ENCODE measurements at regions of chr11 and their contacts with region 1.

Region 1: GRCh38 chr11:45964911-45965389 is 42.5 kb downstream of the LARGE2 start:
- DNase-seq: peak; percentile 66
- ATAC-seq: peak; percentile 95
- H3K4me3 Mint-ChIP-seq: no peak overlapping the region
- H3K27ac Mint-ChIP-seq: no peak overlapping the region
- H3K4me1 Mint-ChIP-seq: no peaks in the 10 kb centered on the region
- H3K27me3 Mint-ChIP-seq: no peaks in the 10 kb centered on the region
- CTCF ChIP-seq: peak; percentile 97

Region 2: GRCh38 chr11:45935349-45936064 is 29.4 kb before region 1 on chr11:
- CTCF ChIA-PET with region 1: interaction called, 14 read pairs
- POLR2A ChIA-PET with region 1: no interaction called
- intact Hi-C with region 1: no loop called
- DNase-seq: no peak
- ATAC-seq: no peak
- H3K4me3 Mint-ChIP-seq: no peak overlapping the region
- H3K27ac Mint-ChIP-seq: no peak overlapping the region
- H3K4me1 Mint-ChIP-seq: peaks cover 7% of the 10 kb centered on the region
- H3K27me3 Mint-ChIP-seq: no peaks in the 10 kb centered on the region
- CTCF ChIP-seq: no peak

Region 3: DNA sequence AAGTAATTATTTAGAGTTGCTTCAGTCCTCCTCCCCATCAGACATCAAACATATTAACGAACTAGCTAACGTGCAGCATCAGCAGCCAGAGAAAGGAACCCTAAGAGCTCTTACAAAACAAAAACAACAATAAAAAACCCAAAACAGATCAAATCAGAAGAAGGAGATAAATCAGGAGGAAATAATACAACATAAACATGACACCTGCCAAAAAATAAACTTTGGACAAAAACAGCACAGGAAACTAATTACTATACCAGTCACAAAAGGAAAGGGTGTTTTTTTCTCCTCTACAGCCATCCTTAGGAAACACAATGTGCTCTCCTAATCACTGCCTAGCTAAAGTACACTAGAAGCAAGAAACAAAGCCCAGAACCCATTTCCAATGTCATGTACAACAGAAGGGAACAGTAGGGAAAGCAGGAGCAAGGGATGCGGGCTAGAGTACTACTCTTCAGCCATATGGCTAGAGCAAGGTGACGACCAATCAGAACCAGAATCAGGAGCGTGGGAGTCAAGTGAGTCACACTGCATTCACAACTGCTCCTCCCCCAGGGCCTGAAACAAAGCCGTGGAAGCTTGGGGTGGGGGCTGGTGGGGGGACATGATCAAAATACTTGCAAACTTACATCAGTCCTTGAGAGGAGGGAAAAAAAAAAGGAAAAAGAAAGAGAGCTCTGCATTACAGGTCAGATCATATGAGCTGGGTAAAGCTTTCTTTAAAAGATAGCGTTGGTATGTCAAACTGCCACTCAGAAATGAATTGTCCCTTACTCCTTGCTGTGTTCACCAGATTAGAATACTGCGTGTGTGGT is 17.9 kb after region 1 on chr11:
- CTCF ChIA-PET with region 1: interaction called, 61 read pairs
- POLR2A ChIA-PET with region 1: interaction called, 4 read pairs
- intact Hi-C with region 1: no loop called
- DNase-seq: peak; percentile 66
- ATAC-seq: peak; percentile 89
- H3K4me3 Mint-ChIP-seq: peak overlapping the region; percentile 20
- H3K27ac Mint-ChIP-seq: peak overlapping the region; percentile 40
- H3K4me1 Mint-ChIP-seq: peaks cover 27% of the 10 kb centered on the region
- H3K27me3 Mint-ChIP-seq: no peaks in the 10 kb centered on the region
- CTCF ChIP-seq: no peak

Region 4: DNA sequence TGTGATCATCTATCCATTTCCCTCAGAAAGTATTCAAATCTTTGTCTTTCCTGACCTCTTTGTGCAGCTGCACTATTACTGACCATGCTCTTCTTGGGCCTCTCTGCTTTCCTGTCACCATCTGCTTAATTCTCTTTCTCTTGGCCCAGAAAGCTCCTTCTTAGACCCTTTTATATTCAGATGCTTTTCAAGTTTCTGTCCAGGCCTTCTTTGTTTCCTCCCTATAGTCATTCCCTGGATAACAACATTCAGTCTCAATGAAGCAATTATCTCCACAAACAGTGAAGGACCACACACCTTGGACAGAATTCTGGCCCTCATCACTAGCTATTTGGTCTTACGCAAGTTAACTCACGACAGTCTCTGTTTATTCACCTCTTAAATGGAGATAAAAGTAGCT is 47.2 kb after region 1 on chr11:
- CTCF ChIA-PET with region 1: interaction called, 89 read pairs
- POLR2A ChIA-PET with region 1: no interaction called
- intact Hi-C with region 1: no loop called
- DNase-seq: no peak
- ATAC-seq: no peak
- H3K4me3 Mint-ChIP-seq: no peak overlapping the region
- H3K27ac Mint-ChIP-seq: no peak overlapping the region
- H3K4me1 Mint-ChIP-seq: peaks cover 4% of the 10 kb centered on the region
- H3K27me3 Mint-ChIP-seq: no peaks in the 10 kb centered on the region
- CTCF ChIP-seq: no peak

Region 5: DNA sequence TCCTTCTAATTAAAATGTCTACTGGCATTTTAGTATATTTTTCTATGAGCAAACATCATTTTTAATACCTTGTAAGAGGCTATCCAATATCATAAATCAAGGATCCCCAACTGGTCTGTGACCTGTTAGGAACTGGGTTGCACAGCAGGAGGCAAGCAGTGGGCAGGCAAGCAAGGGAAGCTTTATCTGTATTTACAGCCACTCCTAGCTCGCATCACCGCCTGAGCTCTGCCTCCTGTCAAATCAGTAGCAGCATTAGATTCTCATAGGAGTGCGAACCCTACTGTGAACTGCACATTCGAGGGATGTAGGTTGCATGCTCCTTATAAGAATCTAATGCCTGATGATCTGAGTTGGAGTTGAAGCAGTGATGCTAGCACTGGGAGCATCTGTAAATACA is 242.3 kb after region 1 on chr11:
- CTCF ChIA-PET with region 1: interaction called, 10 read pairs
- POLR2A ChIA-PET with region 1: no interaction called
- intact Hi-C with region 1: no loop called
- DNase-seq: no peak
- ATAC-seq: no peak
- H3K4me3 Mint-ChIP-seq: no peak overlapping the region
- H3K27ac Mint-ChIP-seq: no peak overlapping the region
- H3K4me1 Mint-ChIP-seq: peaks cover 11% of the 10 kb centered on the region
- H3K27me3 Mint-ChIP-seq: peaks cover 15% of the 10 kb centered on the region
- CTCF ChIP-seq: no peak

Region 6: DNA sequence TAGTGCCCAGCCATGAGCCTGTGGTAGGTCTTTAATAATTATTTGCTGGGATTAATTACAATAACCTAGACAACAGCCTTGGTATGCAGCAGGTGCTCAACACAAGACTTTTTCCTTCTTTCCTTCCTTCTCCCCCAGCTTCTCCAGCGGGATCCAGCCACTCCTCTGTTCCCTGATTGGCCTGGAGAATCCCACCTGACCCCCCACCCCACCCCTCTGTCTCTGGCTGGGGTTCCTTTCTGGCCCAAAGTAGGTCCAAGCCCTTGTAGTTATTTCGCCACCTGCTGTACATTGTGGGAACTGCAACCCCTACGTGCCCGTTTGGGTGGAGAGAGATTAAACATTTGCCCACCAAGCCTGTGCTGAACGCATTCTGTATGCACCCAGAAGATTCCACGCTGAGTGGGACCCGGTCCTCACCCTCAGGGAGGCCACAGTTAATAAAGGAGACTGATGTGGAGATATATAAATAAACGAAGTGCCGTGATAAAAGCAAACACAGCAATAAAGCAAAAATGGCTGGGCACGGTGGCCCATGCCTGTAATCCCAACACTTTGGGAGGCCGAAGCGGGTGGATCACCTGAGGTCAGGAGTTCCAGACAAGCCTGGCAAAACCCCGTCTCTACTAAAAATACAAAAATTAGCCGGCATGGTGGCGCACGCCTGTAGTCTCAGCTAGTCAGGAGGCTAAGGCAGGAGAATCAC is 350.2 kb after region 1 on chr11:
- CTCF ChIA-PET with region 1: interaction called, 14 read pairs
- POLR2A ChIA-PET with region 1: no interaction called
- intact Hi-C with region 1: loop called (anchors 10 kb)
- DNase-seq: peak; percentile 90
- ATAC-seq: peak; percentile 93
- H3K4me3 Mint-ChIP-seq: no peak overlapping the region
- H3K27ac Mint-ChIP-seq: no peak overlapping the region
- H3K4me1 Mint-ChIP-seq: peaks cover 14% of the 10 kb centered on the region
- H3K27me3 Mint-ChIP-seq: no peaks in the 10 kb centered on the region
- CTCF ChIP-seq: peak; percentile 97

Measured in activated CD8-positive, alpha-beta T cell treated with anti-CD3 and anti-CD28 coated beads for 36 hours (primary cell).